Activated CD4-positive, alpha-beta T cell treated with anti-CD3 and anti-CD28 coated beads for 36 hours (primary cell): ENCODE measurements at regions of chr1 and their contacts with region 1.

Region 1: DNA sequence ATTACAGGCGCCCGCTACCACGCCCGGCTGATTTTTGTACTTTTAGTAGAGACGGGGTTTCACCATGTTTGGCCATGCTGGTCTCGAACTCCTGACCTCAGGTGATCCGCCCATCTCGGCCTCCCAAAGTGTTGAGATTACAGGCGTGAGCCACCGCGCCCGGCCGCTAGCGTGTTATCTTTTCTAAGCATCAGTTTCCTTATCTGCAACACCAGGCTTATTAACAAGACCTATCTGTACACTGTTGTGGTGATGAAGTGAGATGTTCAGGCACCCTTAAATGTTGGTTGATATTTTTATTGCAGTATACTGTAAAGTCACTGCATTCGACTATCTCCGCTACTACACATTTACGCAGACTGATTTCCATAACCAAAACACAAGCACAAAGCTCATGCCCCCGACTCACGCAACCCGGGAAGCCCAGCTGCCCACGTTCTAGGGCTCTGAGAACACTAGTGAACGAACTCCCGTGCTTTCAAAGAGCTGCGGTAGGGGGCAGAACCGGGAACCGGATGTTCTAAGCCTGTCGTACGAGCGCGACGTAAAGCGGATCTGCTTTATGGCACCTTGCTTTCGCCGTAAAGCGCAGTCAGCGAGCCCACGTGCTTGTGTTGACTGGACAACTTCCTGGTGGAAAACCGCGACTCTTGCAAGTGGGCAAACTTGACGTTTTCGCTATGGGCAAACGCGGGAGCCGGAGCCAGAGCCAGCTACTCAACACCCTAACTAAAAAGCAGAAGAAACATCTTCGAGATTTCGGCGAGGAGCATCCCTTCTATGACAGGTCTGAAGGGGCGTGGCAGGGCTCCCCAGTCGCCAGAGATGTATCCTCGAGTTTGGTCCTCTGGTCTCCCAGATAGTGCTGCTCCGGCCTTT is at the start of gene UTP25:
- DNase-seq: peak; percentile 96
- ATAC-seq: peak; percentile 86
- H3K4me3 Mint-ChIP-seq: peak within 1 kb of the TSS; percentile 87
- H3K27ac Mint-ChIP-seq: peak within 1 kb of the TSS; percentile 92
- H3K4me1 Mint-ChIP-seq: peaks cover 45% of the 10 kb centered on the region
- H3K27me3 Mint-ChIP-seq: peaks cover 4% of the 10 kb centered on the region
- total RNA-seq, gene UTP25: 9.4 to 10.4 TPM

Region 2: GRCh38 chr1:208997726-208998312 is 829.8 kb before region 1 on chr1:
- CTCF ChIA-PET with region 1: no interaction called
- POLR2A ChIA-PET with region 1: no interaction called
- intact Hi-C with region 1: no loop called
- DNase-seq: no peak
- ATAC-seq: no peak
- H3K4me3 Mint-ChIP-seq: no peak overlapping the region
- H3K27ac Mint-ChIP-seq: no peak overlapping the region
- H3K4me1 Mint-ChIP-seq: no peaks in the 10 kb centered on the region
- H3K27me3 Mint-ChIP-seq: peaks cover 9% of the 10 kb centered on the region

Region 3: GRCh38 chr1:209674957-209675564 is 152.6 kb before region 1 on chr1 and contains the start of gene G0S2:
- CTCF ChIA-PET with region 1: no interaction called
- POLR2A ChIA-PET with region 1: no interaction called
- intact Hi-C with region 1: loop called in 1 of 2 experiments (anchors 2 kb)
- DNase-seq: peak; percentile 70
- ATAC-seq: peak; percentile 31
- H3K4me3 Mint-ChIP-seq: peak within 1 kb of the TSS; percentile 71
- H3K27ac Mint-ChIP-seq: peak within 1 kb of the TSS; percentile 84
- H3K4me1 Mint-ChIP-seq: peaks cover 56% of the 10 kb centered on the region
- H3K27me3 Mint-ChIP-seq: peaks cover 38% of the 10 kb centered on the region
- total RNA-seq, gene G0S2: 21.9 to 22.8 TPM

Region 4: DNA sequence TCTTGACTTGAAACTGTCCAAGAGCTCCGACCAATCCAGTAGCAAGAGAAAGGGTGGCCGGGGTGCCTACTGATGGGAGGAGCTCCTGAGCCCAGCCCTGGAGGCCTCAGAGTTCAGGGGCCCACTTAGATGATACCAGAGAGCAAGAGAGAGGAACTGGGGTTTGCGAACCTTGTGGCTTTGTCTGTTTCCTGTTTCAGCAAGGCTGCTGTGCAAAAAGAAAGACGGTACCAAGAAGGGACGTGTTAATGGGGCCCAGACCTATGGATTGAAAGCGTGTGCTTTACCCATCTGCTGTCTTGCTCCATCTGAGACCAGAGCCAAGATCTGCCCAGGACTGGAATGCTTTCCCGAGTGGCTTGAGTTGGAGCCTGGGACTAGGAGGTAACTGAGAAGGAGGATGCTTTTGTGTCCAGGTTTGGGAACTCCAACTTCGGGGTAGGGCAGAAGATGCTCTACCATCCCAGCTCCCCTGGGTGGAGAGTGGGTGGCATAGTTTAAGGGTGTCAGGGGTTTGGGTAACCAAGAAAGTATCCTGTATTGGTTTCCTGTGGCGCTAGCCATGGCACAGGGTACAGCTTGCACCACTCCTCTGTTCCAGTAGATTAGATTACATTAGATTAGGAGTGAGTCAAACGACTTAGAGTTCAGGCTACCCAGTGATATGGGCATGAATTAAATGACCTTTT is 71.6 kb before region 1 on chr1 and contains the start of gene TRAF3IP3:
- CTCF ChIA-PET with region 1: interaction called, 12 read pairs
- POLR2A ChIA-PET with region 1: interaction called, 5 read pairs
- intact Hi-C with region 1: loop called (anchors 1 to 2 kb)
- DNase-seq: peak; percentile 89
- ATAC-seq: peak; percentile 76
- H3K4me3 Mint-ChIP-seq: peak within 1 kb of the TSS; percentile 95
- H3K27ac Mint-ChIP-seq: peak within 1 kb of the TSS; percentile 99
- H3K4me1 Mint-ChIP-seq: peaks cover 75% of the 10 kb centered on the region
- H3K27me3 Mint-ChIP-seq: no peaks in the 10 kb centered on the region
- total RNA-seq, gene TRAF3IP3: 136 to 138 TPM

Region 5: GRCh38 chr1:209774592-209774991 is 53.0 kb before region 1 on chr1:
- CTCF ChIA-PET with region 1: interaction called, 24 read pairs
- POLR2A ChIA-PET with region 1: no interaction called
- intact Hi-C with region 1: loop called (anchors 1 to 2 kb)
- DNase-seq: no peak
- ATAC-seq: no peak
- H3K4me3 Mint-ChIP-seq: no peak overlapping the region
- H3K27ac Mint-ChIP-seq: peak overlapping the region; percentile 81
- H3K4me1 Mint-ChIP-seq: peaks cover 24% of the 10 kb centered on the region
- H3K27me3 Mint-ChIP-seq: no peaks in the 10 kb centered on the region

Region 6: GRCh38 chr1:209815931-209816341 is 11.7 kb before region 1 on chr1:
- CTCF ChIA-PET with region 1: interaction called, 45 read pairs
- POLR2A ChIA-PET with region 1: no interaction called
- intact Hi-C with region 1: no loop called
- DNase-seq: no peak
- ATAC-seq: no peak
- H3K4me3 Mint-ChIP-seq: no peak overlapping the region
- H3K27ac Mint-ChIP-seq: peak overlapping the region; percentile 76
- H3K4me1 Mint-ChIP-seq: peaks cover 12% of the 10 kb centered on the region
- H3K27me3 Mint-ChIP-seq: peaks cover 5% of the 10 kb centered on the region

Region 7: DNA sequence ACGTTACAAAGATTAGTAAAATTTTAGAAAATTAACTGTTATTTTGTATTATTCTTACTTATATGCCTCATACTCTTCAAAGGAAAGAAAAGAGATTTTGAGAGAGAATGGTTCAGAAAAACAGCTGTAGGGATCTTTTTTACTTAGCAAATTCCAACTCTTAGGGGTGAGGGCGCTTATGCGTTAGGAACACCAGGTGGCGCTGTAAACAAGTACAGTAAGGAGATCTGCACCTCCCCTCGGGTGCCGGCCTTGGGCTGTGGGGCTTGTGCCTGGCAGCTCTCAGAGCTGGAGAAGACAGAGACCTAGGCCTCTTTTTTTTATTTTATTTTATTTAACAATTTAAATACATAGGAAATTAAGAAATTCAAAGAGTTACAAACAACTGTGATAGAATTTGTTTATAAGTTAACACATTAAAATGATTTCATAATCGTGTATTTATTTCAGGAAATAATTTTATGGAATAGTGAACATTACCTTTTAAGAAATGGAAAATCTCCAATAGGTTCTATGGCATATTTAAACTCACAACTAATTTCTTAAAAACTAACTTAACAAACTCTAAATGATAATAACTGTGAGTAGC is 32.8 kb after region 1 on chr1:
- CTCF ChIA-PET with region 1: interaction called, 10 read pairs
- POLR2A ChIA-PET with region 1: interaction called, 7 read pairs
- intact Hi-C with region 1: no loop called
- DNase-seq: peak; percentile 86
- ATAC-seq: peak; percentile 95
- H3K4me3 Mint-ChIP-seq: no peak overlapping the region
- H3K27ac Mint-ChIP-seq: no peak overlapping the region
- H3K4me1 Mint-ChIP-seq: no peaks in the 10 kb centered on the region
- H3K27me3 Mint-ChIP-seq: peaks cover 4% of the 10 kb centered on the region